ENCODE measurements at regions of chr5 and their contacts with region 1.

Region 1: DNA sequence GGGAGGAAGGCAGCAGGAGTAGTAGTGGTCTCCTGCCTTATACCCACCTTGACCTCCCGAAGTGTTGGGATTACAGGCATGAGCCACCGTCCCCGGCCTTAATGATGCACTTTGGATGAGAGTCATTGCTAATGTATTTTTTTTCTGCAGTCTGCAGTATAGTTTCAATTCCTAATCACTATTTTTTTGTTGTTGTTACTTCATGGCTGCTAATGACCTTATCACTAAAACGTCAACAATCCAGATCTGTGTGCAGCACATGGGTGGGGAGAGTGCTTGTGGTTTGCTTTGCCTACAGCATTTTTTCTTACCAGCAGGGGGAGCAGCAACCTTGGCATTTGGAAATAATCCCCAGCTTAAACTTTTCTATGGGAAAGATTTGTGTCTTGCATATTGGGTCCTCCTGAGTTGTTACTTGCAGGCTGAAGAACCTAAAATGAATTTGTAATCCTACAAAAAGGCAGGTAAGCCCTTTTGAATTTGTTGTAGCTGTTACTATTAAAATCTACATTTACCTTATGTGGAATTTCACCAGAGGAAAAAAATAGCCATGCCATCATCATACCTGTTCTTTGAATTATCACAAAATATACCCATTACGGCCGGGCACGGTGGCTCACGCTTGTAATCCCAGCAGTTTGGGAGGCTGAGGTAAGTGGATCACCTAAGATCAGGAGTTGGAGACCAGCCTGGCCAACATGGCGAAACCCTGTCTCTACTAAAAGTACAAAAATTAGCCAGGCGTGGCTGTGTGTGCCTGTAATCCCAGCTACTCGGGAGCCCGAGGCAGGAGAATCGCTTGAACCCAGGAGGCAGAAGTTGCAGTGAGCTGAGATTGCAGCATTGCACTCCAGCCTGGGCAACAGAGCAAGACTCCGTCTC is 6.3 kb upstream of the MED7 start:
- DNase-seq: peak; percentile 60
- ATAC-seq: peak; percentile 93
- H3K4me3 ChIP-seq: no peak overlapping the region
- H3K27ac ChIP-seq: no peak overlapping the region
- H3K4me1 ChIP-seq: no peaks in the 10 kb centered on the region
- H3K27me3 ChIP-seq: no peaks in the 10 kb centered on the region; the same call in 1 of the 2 replicates
- CTCF ChIP-seq: peak; percentile 84
- POLR2A ChIP-seq: no peak
- RAD21 ChIP-seq: peak; percentile 68

Region 2: DNA sequence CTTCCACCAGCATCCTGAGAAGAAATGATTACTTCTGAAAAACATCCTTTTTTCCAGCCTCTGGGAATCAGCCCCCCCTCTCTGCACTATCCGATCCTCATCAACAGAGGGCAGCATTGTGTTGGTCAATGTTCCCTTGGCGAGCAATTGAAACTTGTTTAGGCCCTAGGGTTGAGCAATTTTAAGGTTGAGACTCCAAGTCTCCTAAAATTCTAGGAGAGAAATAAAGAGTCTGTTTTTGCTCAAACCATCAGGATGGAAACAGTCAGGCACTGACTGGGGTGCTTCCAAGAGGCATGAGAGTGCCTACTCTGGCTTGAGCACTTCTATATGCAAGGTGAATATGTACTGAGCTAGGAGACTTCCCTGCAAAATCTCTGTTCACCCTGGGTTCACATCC is 104.6 kb after region 1 on chr5:
- CTCF ChIA-PET with region 1: no interaction called
- POLR2A ChIA-PET with region 1: no interaction called
- dilution Hi-C with region 1: no loop called
- in situ Hi-C with region 1: no loop called
- intact Hi-C with region 1: loop called (anchors 5 kb)
- DNase-seq: peak; percentile 47
- ATAC-seq: peak; percentile 96
- H3K4me3 ChIP-seq: no peak overlapping the region
- H3K27ac ChIP-seq: no peak overlapping the region
- H3K4me1 ChIP-seq: no peaks in the 10 kb centered on the region; the same call in 1 of the 2 replicates
- H3K27me3 ChIP-seq: peaks cover 11% of the 10 kb centered on the region
- CTCF ChIP-seq: peak; percentile 93
- POLR2A ChIP-seq: no peak
- RAD21 ChIP-seq: peak; percentile 88

Region 3: DNA sequence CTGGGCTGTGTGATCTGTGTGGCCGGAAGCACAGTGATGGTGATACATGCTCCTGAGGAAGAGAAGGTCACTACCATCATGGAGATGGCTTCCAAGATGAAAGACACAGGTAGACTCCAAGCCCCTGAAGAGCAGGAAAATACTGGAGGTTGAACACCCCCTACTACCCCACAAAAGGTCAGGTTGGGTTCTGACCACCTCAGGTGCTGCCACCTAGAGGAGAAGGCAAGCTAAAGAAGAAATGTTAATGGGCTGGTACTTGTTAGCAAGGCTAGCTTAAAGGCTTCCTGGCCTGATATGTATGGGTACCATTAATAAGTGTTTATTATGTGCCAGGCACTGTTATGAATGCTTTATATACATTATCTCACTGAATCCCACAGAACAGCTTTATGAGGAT is 322.7 kb after region 1 on chr5:
- CTCF ChIA-PET with region 1: no interaction called
- POLR2A ChIA-PET with region 1: no interaction called
- dilution Hi-C with region 1: no loop called
- in situ Hi-C with region 1: no loop called
- intact Hi-C with region 1: loop called (anchors 2 kb)
- DNase-seq: peak; percentile 33
- ATAC-seq: peak; percentile 58
- H3K4me3 ChIP-seq: no peak overlapping the region
- H3K27ac ChIP-seq: no peak overlapping the region
- H3K4me1 ChIP-seq: peaks cover 9% of the 10 kb centered on the region; the same call in 1 of the 2 replicates
- H3K27me3 ChIP-seq: no peaks in the 10 kb centered on the region
- CTCF ChIP-seq: peak; percentile 55
- POLR2A ChIP-seq: no peak
- RAD21 ChIP-seq: peak; percentile 39; the same call in 1 of the 2 replicates